Activated CD4-positive, alpha-beta T cell treated with anti-CD3 and anti-CD28 coated beads for 36 hours (primary cell): ENCODE measurements at regions of chr11 and their contacts with region 1.

Region 1: GRCh38 chr11:87037450-87038234 is at the start of gene TMEM135:
- DNase-seq: peak; percentile 97
- ATAC-seq: peak; percentile 97
- H3K4me3 Mint-ChIP-seq: peak within 1 kb of the TSS; percentile 97
- H3K27ac Mint-ChIP-seq: peak within 1 kb of the TSS; percentile 93
- H3K4me1 Mint-ChIP-seq: peaks cover 40% of the 10 kb centered on the region
- H3K27me3 Mint-ChIP-seq: no peaks in the 10 kb centered on the region
- total RNA-seq, gene TMEM135: 25.5 to 26.0 TPM

Region 2: DNA sequence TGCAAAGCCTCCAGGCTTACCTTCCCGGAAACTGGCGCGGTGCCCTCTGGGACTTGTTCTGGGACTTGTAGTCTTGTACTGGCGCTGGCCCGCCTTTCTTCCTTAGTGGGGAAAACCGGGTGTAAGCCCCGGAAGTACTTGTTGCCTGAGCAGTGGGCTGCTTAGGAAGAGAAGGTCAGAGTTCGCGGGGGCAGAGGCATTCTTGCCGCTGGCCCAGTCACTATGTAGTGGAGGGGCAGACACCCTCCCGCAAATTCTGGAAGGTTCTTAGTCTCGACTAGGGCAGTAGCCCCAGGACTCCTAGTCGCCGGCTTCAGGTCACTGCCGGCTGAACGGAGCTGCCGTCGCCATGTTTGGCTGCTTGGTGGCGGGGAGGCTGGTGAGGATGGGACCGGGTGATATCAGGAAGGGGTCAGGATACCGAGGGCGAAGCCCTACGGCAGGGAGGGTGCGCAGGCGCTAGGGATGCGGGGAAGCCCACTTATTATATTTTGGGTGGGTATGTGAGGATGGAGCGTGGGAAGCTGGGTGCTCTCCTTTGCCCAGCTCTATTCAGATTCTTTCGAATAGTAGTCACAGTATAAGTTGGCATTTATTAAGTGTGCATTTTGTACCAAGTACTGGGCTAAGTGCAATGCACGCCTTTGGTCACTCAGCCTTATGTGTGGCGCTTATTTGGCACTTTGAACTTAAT is 735.4 kb before region 1 on chr11 and contains the start of gene HIKESHI:
- CTCF ChIA-PET with region 1: no interaction called
- POLR2A ChIA-PET with region 1: no interaction called
- intact Hi-C with region 1: loop called in 1 of 2 experiments (anchors 5 kb)
- DNase-seq: peak; percentile 97
- ATAC-seq: peak; percentile 99
- H3K4me3 Mint-ChIP-seq: peak within 1 kb of the TSS; percentile 96
- H3K27ac Mint-ChIP-seq: peak within 1 kb of the TSS; percentile 99
- H3K4me1 Mint-ChIP-seq: peaks cover 31% of the 10 kb centered on the region
- H3K27me3 Mint-ChIP-seq: no peaks in the 10 kb centered on the region
- total RNA-seq, gene HIKESHI: 50.2 to 51.3 TPM

Region 3: GRCh38 chr11:87063982-87064381 is 26.3 kb after region 1 on chr11:
- CTCF ChIA-PET with region 1: no interaction called
- POLR2A ChIA-PET with region 1: no interaction called
- intact Hi-C with region 1: loop called in 1 of 2 experiments (anchors 2 kb)
- DNase-seq: no peak
- ATAC-seq: no peak
- H3K4me3 Mint-ChIP-seq: no peak overlapping the region
- H3K27ac Mint-ChIP-seq: no peak overlapping the region
- H3K4me1 Mint-ChIP-seq: peaks cover 10% of the 10 kb centered on the region
- H3K27me3 Mint-ChIP-seq: no peaks in the 10 kb centered on the region

Region 4: DNA sequence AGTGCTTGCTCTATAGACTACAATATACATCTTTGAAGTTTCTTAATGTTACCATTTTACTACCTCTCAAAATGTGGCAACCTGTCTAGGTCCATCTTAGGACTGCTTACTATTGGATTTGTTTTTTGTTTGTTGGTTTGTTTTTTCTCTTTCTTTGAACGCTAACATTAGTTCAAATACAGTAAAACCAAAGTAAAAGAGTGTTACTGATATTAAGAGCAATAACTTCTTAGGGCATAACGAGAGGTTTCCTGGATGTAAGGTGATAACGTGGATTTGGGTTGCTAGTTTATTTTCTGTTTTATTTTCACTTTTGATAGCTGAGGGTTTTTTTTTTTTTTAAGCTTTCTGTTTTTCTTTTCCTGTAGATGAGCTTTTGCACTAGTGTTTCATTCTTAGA is 43.7 kb after region 1 on chr11:
- CTCF ChIA-PET with region 1: interaction called, 3 read pairs
- POLR2A ChIA-PET with region 1: no interaction called
- intact Hi-C with region 1: loop called (anchors 1 to 10 kb)
- DNase-seq: no peak
- ATAC-seq: peak; percentile 71
- H3K4me3 Mint-ChIP-seq: peak overlapping the region; percentile 65
- H3K27ac Mint-ChIP-seq: peak overlapping the region; percentile 87
- H3K4me1 Mint-ChIP-seq: peaks cover 25% of the 10 kb centered on the region
- H3K27me3 Mint-ChIP-seq: no peaks in the 10 kb centered on the region

Region 5: GRCh38 chr11:87252869-87253268 is 215.2 kb after region 1 on chr11:
- CTCF ChIA-PET with region 1: interaction called, 3 read pairs
- POLR2A ChIA-PET with region 1: no interaction called
- intact Hi-C with region 1: loop called in 1 of 2 experiments (anchors 1 kb)
- DNase-seq: no peak
- ATAC-seq: peak; percentile 95
- H3K4me3 Mint-ChIP-seq: no peak overlapping the region
- H3K27ac Mint-ChIP-seq: peak overlapping the region; percentile 4
- H3K4me1 Mint-ChIP-seq: peaks cover 20% of the 10 kb centered on the region
- H3K27me3 Mint-ChIP-seq: peaks cover 2% of the 10 kb centered on the region

Region 6: GRCh38 chr11:88301488-88302140 is 1264.0 kb after region 1 on chr11:
- CTCF ChIA-PET with region 1: no interaction called
- POLR2A ChIA-PET with region 1: no interaction called
- intact Hi-C with region 1: no loop called
- DNase-seq: peak; percentile 16
- ATAC-seq: peak; percentile 54
- H3K4me3 Mint-ChIP-seq: no peak overlapping the region
- H3K27ac Mint-ChIP-seq: peak overlapping the region; percentile 89
- H3K4me1 Mint-ChIP-seq: peaks cover 33% of the 10 kb centered on the region
- H3K27me3 Mint-ChIP-seq: no peaks in the 10 kb centered on the region